Astrocyte of the cerebellum (primary cell): ENCODE measurements at regions of chr2 and their contacts with region 1.

Region 1: GRCh38 chr2:128260239-128261138 is 58.2 kb downstream of the HS6ST1 start:
- DNase-seq: peak; percentile 81
- H3K4me3 ChIP-seq: no peak overlapping the region
- CTCF ChIP-seq: peak; percentile 37

Region 2: GRCh38 chr2:128301501-128301966 is 41.0 kb after region 1 on chr2:
- in situ Hi-C with region 1: loop called (anchors 5 kb)
- DNase-seq: peak; percentile 92
- H3K4me3 ChIP-seq: no peak overlapping the region
- CTCF ChIP-seq: no peak